ENCODE measurements at regions of chr5 and their contacts with region 1.

Region 1: GRCh38 chr5:157464519-157465171 is 4.6 kb downstream of the NIPAL4 start:
- DNase-seq: peak; percentile 57
- CTCF ChIP-seq: no peak

Region 2: GRCh38 chr5:157476702-157477408 is 12.2 kb after region 1 on chr5:
- CTCF ChIA-PET with region 1: interaction called, 88 read pairs
- POLR2A ChIA-PET with region 1: interaction called, 3 read pairs
- DNase-seq: peak; percentile 72
- CTCF ChIP-seq: peak; percentile 75

Region 3: GRCh38 chr5:157540707-157541446 is 76.2 kb after region 1 on chr5:
- CTCF ChIA-PET with region 1: no interaction called
- POLR2A ChIA-PET with region 1: no interaction called
- DNase-seq: peak; percentile 77
- CTCF ChIP-seq: no peak

Region 4: GRCh38 chr5:157718519-157718918 is 253.9 kb after region 1 on chr5:
- CTCF ChIA-PET with region 1: interaction called, 11 read pairs
- POLR2A ChIA-PET with region 1: no interaction called
- DNase-seq: peak; percentile 52
- CTCF ChIP-seq: peak; percentile 59